ENCODE measurements at regions of chr11 and their contacts with region 1.

Region 1: DNA sequence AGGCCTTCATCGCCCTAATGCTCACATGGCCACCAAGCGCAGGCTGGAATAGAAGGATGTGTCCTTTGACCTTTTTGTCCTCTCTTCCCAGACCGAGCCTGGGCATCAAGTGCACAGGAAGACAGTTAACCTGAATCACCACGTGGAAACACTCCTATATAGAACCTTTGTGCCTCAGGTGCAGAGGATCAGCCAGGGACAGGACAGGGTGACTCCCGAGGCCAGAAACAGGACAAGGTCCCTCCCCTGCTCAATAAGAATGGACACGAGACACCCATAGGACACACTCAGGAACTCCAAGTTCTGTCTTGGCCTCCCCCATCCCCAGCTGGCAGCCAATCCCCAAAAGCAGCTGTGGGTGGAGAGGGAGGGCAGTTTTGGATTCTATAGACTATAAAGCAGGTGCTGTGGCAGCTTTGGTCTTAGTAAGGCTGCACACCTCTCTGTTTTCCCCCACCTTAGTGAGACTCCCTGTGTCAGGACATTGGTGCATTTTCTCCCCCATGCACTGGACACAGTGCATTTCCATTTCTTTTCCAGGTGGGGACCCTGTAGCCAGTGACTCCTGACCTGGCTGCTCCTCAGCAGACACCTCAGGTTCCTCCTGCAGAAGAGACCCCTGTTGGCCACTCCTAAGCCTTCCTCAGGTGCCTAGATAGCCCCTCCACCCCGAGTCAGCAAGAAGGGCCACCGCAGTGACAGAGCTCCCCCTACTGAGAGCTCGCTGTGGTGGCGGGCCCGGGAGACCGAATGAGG is 43.6 kb upstream of the POU2AF1 start:
- DNase-seq: peak; percentile 84
- ATAC-seq: peak; percentile 83
- H3K4me3 ChIP-seq: no peak overlapping the region
- H3K4me3 Mint-ChIP-seq: peak overlapping the region; percentile 64
- H3K27ac ChIP-seq: no peak overlapping the region
- H3K27ac Mint-ChIP-seq: peak overlapping the region; percentile 90
- H3K4me1 ChIP-seq: peaks cover 58% of the 10 kb centered on the region in 2 donors
- H3K4me1 Mint-ChIP-seq: peaks cover 58% of the 10 kb centered on the region
- H3K27me3 ChIP-seq: no peaks in the 10 kb centered on the region
- H3K27me3 Mint-ChIP-seq: no peaks in the 10 kb centered on the region
- CTCF ChIP-seq: peak; percentile 88

Region 2: DNA sequence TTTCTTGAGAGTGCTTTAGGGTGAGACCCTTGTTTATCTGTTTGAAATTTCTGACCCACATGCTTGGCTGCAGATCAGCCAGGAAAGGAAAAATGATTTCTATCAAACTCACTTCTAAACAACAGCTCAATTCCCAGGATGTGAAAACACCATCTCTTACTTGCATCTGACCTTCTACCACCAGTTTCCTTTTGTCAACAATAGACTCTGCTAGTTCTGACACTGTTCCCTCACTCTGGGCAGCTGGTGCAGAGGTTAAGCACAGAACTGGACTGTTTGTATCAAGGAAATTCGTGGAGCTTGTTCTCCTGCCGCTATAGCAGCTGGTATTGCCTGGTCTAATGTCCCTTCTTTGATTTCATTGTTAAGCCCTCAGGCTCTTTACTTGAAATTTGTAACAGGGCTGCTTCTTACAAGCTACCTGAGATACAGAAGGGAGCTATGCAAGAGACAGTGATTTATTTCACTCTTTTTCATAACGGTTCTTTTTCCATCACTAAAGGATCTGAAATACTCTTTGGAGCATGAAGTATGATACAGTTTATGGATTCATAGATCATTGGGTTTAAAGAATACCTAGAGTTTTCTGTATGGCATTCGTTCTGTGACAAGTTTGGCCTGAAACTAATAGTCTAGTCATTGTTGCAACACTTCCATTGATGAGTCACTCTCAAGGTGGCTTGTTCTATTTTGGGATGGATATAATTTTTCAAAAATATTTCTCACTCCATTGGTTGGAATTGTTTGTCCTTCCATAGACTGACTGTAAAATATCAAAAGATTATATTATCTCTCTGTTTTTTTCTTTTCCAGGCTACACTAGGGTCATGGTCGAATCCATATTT is 1507.6 kb before region 1 on chr11:
- CTCF ChIA-PET with region 1: no interaction called
- POLR2A ChIA-PET with region 1: no interaction called
- intact Hi-C with region 1: no loop called
- DNase-seq: no peak
- ATAC-seq: no peak
- H3K4me3 ChIP-seq: no peak overlapping the region
- H3K4me3 Mint-ChIP-seq: no peak overlapping the region
- H3K27ac ChIP-seq: no peak overlapping the region
- H3K27ac Mint-ChIP-seq: no peak overlapping the region
- H3K4me1 ChIP-seq: no peaks in the 10 kb centered on the region
- H3K4me1 Mint-ChIP-seq: no peaks in the 10 kb centered on the region
- H3K27me3 ChIP-seq: peaks cover 0 to 4% (median 0%) of the 10 kb centered on the region in 4 experiments
- H3K27me3 Mint-ChIP-seq: peaks cover 6% of the 10 kb centered on the region
- CTCF ChIP-seq: no peak

Region 3: DNA sequence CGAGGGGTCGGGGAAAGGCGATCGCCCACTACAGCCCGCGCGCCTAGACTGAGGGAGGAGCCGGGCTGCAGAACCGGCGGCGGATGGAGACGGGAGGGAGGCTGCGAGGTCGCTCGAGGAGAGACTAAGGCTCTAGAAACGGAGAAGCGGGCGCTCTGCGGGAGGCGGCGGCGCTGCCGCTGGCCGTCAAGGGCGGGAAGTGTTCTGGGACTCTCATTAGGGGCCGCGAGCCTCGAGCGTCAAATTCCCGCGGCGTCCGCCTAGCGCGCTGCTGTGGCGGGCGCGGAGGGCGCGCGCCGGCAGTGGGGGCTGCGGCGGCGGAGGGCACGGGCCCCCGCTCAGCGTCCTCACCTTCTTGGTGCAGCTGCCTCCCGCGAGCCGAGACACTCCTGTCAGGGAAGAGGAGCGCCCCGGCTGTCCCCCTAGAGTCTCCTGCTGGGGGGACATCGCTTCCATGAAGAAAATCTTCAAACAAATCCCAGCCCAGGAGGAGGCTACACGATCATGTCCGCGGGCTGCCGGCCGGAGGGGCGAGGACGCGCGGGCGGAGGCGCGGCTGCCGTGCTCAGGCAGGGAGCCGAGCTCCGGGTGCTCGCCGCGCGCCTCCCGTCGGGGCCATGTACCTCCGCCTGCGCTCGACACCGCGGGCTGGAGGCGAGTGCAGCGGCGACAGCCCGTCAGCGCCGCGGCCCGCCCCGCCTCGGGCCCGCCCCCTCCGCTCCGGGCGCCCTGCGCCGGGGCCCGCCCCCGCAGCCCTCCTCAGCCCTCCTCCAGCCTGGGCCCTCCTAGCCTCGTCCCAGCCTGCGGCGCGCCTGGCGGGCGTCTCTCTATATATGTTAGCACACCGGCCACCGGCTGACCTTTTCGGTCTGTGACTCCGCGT is 710.7 kb before region 1 on chr11 and contains the start of gene ARHGAP20:
- CTCF ChIA-PET with region 1: no interaction called
- POLR2A ChIA-PET with region 1: no interaction called
- intact Hi-C with region 1: loop called (anchors 10 kb)
- DNase-seq: peak; percentile 79
- ATAC-seq: peak; percentile 93
- H3K4me3 ChIP-seq: peak within 1 kb of the TSS; percentile 26 to 86 (median 74)
- H3K4me3 Mint-ChIP-seq: peak within 1 kb of the TSS; percentile 89
- H3K27ac ChIP-seq: peak within 1 kb of the TSS in 1 of 2 donors; percentile 13
- H3K27ac Mint-ChIP-seq: peak within 1 kb of the TSS; percentile 54
- H3K4me1 ChIP-seq: peaks cover 17 to 23% of the 10 kb centered on the region in 2 donors
- H3K4me1 Mint-ChIP-seq: peaks cover 17% of the 10 kb centered on the region
- H3K27me3 ChIP-seq: peaks cover 0 to 41% (median 23%) of the 10 kb centered on the region in 4 experiments
- H3K27me3 Mint-ChIP-seq: peaks cover 47% of the 10 kb centered on the region
- CTCF ChIP-seq: no peak
- total RNA-seq, gene ARHGAP20: 0.58 and 0.91 TPM in 2 replicates

Region 4: DNA sequence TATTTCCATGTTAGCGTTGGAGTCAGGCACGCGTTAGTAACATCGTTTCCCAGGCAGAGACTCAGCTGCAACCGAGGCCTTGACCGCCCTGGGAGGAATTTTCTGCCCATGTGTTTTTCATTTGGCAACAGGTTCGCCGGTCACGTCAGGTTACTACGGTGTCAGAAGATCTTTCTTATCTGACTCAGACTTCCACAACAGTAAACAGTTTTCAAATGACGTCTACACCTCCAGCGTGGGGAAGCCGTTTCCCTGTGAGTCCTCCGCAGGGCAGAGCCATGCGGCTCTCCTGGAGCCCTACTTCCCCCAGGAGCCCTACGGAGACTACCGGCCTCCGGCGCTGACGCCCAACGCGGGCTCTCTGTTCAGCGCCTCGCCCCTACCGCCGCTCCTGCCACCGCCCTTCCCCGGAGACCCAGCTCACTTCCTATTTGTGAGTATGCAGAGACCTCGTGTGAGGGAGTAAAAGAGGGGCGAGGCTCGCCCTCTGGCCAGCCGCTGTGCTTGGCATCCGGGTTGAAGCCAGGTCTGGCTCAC is 138.7 kb before region 1 on chr11:
- CTCF ChIA-PET with region 1: interaction called, 571 read pairs
- POLR2A ChIA-PET with region 1: interaction called, 7 read pairs
- intact Hi-C with region 1: loop called (anchors 1 kb)
- DNase-seq: peak; percentile 37
- ATAC-seq: peak; percentile 63
- H3K4me3 ChIP-seq: peak overlapping the region in 1 of 5 experiments; percentile 9
- H3K4me3 Mint-ChIP-seq: peak overlapping the region; percentile 49
- H3K27ac ChIP-seq: no peak overlapping the region
- H3K27ac Mint-ChIP-seq: no peak overlapping the region
- H3K4me1 ChIP-seq: peaks cover 12 to 16% of the 10 kb centered on the region in 2 donors
- H3K4me1 Mint-ChIP-seq: peaks cover 12% of the 10 kb centered on the region
- H3K27me3 ChIP-seq: no peaks in the 10 kb centered on the region
- H3K27me3 Mint-ChIP-seq: no peaks in the 10 kb centered on the region
- CTCF ChIP-seq: no peak

Region 5: DNA sequence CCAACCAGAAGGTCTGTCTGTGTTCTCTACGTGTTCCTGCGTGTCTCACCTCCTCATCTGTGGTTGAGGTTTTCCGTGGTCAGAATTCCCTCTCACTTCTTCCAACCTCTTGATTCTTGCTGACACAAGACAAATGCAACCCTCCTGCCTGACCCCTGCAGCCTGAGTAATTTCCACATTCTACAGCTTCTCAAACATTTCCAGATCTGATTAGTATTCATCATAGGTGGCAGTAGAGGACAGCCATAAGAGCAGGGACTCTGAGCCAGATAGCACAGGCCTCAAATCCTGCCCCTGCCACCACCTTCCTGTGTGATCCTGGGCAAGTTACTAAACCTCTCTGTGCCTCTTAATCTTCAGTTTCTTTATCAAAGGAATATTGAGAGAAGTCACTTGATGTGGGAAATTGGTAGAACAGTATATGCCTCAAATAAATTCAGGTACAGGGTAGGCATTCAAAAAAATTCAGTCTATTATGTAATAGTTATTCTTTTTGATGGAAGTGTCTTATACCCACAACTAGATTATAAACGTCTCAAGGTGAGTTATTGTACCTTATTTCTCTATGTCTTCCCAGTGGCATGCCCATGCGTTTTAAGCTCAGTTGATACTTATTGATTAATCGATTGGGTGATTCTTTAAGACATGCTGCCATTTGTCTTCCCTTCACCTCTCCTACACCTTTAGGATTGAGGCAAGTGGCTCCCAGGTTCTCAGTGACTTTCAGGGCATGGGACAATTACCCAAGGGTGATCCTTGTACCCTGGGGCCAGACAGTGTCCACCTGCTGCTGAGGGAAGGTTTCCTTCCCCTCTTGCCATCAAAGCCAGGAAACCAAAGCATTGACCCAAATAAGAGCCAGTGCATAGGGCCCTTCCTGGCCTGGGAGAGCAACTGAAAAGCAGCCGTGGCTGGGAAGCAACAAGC is 63.2 kb before region 1 on chr11:
- CTCF ChIA-PET with region 1: interaction called, 922 read pairs
- POLR2A ChIA-PET with region 1: interaction called, 14 read pairs
- intact Hi-C with region 1: loop called (anchors 1 kb)
- DNase-seq: peak; percentile 46
- ATAC-seq: peak; percentile 29
- H3K4me3 ChIP-seq: no peak overlapping the region
- H3K4me3 Mint-ChIP-seq: no peak overlapping the region
- H3K27ac ChIP-seq: peak overlapping the region in 1 of 2 donors; percentile 71
- H3K27ac Mint-ChIP-seq: peak overlapping the region; percentile 67
- H3K4me1 ChIP-seq: peaks cover 63 to 73% of the 10 kb centered on the region in 2 donors
- H3K4me1 Mint-ChIP-seq: peaks cover 64% of the 10 kb centered on the region
- H3K27me3 ChIP-seq: no peaks in the 10 kb centered on the region
- H3K27me3 Mint-ChIP-seq: no peaks in the 10 kb centered on the region
- CTCF ChIP-seq: no peak

Region 6: DNA sequence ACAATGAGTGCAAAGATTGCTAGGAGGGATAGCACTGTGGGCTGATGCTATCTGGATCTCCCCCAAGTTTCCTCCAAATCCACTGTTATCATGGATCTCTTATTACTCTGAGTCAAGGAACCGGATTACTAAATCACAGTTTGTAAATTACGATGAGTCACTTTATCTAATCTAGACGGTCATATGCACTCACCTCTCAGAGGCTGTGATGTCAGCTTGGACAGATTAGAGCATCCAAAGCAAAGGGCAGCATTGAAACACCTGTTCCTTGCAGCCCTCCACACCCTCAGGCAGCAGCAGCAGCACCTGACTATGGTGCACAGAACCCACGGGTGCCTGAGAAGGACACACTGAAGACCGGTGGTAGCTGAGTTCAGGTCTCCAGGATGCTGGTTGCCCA is 29.6 kb before region 1 on chr11:
- CTCF ChIA-PET with region 1: interaction called, 163 read pairs
- POLR2A ChIA-PET with region 1: interaction called, 63 read pairs
- intact Hi-C with region 1: loop called (anchors 1 kb)
- DNase-seq: no peak
- ATAC-seq: no peak
- H3K4me3 ChIP-seq: no peak overlapping the region
- H3K4me3 Mint-ChIP-seq: no peak overlapping the region
- H3K27ac ChIP-seq: no peak overlapping the region
- H3K27ac Mint-ChIP-seq: peak overlapping the region; percentile 26
- H3K4me1 ChIP-seq: peaks cover 63 to 68% of the 10 kb centered on the region in 2 donors
- H3K4me1 Mint-ChIP-seq: peaks cover 85% of the 10 kb centered on the region
- H3K27me3 ChIP-seq: no peaks in the 10 kb centered on the region
- H3K27me3 Mint-ChIP-seq: no peaks in the 10 kb centered on the region
- CTCF ChIP-seq: no peak

Region 7: GRCh38 chr11:111441443-111441842 is 18.8 kb after region 1 on chr11:
- CTCF ChIA-PET with region 1: interaction called, 112 read pairs
- POLR2A ChIA-PET with region 1: interaction called, 8 read pairs
- intact Hi-C with region 1: loop called (anchors 1 kb)
- DNase-seq: no peak
- ATAC-seq: no peak
- H3K4me3 ChIP-seq: no peak overlapping the region
- H3K4me3 Mint-ChIP-seq: no peak overlapping the region
- H3K27ac ChIP-seq: no peak overlapping the region
- H3K27ac Mint-ChIP-seq: no peak overlapping the region
- H3K4me1 ChIP-seq: peaks cover 23 to 36% of the 10 kb centered on the region in 2 donors
- H3K4me1 Mint-ChIP-seq: peaks cover 47% of the 10 kb centered on the region
- H3K27me3 ChIP-seq: peaks cover 0 to 3% (median 0%) of the 10 kb centered on the region in 4 experiments
- H3K27me3 Mint-ChIP-seq: no peaks in the 10 kb centered on the region
- CTCF ChIP-seq: no peak